Sigmoid colon (tissue), 7 donors: ENCODE measurements at regions of chr19 and their contacts with region 1.

Region 1: DNA sequence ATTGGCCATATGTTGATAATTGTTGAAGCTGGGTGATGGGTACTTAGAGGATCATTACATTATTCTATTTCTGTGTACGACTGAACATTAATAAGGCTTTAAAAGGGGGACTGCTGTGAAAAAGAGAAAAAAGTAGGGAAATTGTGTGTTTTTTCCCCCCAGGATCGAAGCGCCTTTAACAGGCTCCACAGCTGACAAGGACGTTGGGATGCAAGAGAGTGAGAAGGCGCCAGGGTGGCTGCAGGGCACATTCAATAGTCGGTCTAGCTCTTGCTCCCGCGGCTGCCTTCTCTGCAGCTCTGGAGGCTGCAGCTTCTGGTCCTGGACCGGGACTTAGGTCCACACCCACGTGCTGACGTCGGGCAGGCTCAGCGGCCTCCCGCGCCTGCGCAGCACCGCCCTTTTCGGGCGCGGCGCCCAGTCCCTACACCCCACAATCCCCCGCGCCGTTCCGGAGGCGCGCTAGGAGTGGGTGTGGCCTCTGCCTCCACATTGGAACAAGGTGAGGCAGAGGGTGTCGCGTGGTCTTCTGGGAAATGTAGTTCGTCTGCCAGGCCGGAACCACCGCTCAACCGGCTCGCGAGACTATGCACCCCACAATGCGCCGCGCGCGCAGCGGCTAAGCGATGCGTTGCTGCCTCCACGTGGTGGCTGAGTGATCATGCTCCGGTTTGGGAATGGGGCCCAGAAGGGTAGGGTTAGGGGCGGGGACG is 4.9 kb upstream of the LRFN3 start:
- DNase-seq: peak; percentile 100
- H3K4me3 ChIP-seq: peak overlapping the region in 1 of 4 donors; percentile 18
- H3K27ac ChIP-seq: peak overlapping the region; percentile 71 to 79 (median 76)
- H3K4me1 ChIP-seq: peaks cover 0 to 19% (median 13%) of the 10 kb centered on the region in 4 donors
- H3K27me3 ChIP-seq: no peaks in the 10 kb centered on the region
- CTCF ChIP-seq: peak; percentile 81 to 97 (median 92)
- EP300 ChIP-seq: peak in 1 of 4 donors; percentile 80
- POLR2A ChIP-seq: peak; percentile 71 to 84

Region 2: GRCh38 chr19:35693830-35694599 is 237.3 kb before region 1 on chr19:
- intact Hi-C with region 1: loop called (anchors 2 kb)
- DNase-seq: peak; percentile 93
- H3K4me3 ChIP-seq: no peak overlapping the region
- H3K27ac ChIP-seq: no peak overlapping the region
- H3K4me1 ChIP-seq: no peaks in the 10 kb centered on the region
- H3K27me3 ChIP-seq: no peaks in the 10 kb centered on the region
- CTCF ChIP-seq: peak; percentile 96 to 99 (median 97)
- EP300 ChIP-seq: no peak
- POLR2A ChIP-seq: no peak

Region 3: DNA sequence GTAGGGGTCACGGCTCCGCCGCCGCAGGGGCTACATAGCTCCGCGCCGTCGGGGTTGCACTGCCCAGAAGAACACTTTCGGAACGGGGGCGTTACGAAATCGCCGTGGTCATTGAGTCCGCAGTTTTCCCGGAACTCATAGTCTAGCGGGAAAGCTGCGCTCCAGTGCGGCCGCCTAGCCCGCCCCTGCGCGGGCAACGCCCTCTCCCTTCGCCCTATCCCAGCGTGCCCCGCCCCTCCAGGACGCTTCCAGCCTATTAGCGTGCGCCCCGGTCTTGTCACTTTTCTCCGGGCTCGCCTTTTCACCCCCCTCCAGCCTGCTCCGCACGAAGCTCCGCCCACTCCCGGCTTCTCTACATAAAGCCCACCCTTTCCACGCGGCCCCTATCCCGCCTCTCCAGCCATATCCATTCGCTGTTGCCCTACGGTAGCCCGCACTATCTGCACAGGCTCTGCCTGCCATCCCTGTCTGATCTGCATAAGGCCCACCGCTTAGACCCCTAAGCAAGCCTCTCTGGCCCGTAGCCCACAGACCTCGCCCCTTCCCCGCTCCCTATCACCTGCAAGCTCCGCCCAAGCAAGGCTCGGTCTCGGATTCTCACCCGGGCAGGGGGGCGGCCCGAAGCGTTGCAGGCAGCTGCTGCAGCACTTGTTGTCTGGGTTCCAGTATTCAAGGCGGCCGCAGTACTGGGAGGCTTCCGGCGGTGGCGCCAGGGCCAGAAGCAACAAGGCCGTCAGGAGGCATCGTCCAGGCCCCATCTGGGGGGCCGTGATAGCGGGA is 190.7 kb before region 1 on chr19:
- intact Hi-C with region 1: loop called (anchors 1 kb)
- DNase-seq: peak; percentile 99
- H3K4me3 ChIP-seq: peak overlapping the region; percentile 38 to 69 (median 51)
- H3K27ac ChIP-seq: peak overlapping the region; percentile 84 to 91 (median 87)
- H3K4me1 ChIP-seq: peaks cover 0 to 38% (median 30%) of the 10 kb centered on the region in 4 donors
- H3K27me3 ChIP-seq: no peaks in the 10 kb centered on the region
- CTCF ChIP-seq: peak in 2 of 4 experiments; percentile 17 to 26
- EP300 ChIP-seq: peak in 1 of 4 donors; percentile 76
- POLR2A ChIP-seq: no peak

Region 4: GRCh38 chr19:35775298-35776110 is 155.8 kb before region 1 on chr19 and contains the start of gene ARHGAP33:
- intact Hi-C with region 1: loop called (anchors 5 kb)
- DNase-seq: peak; percentile 99
- H3K4me3 ChIP-seq: peak within 1 kb of the TSS; percentile 76 to 97 (median 81)
- H3K27ac ChIP-seq: peak within 1 kb of the TSS in 3 of 4 donors; percentile 63 to 74 (median 69)
- H3K4me1 ChIP-seq: peaks cover 0 to 19% (median 14%) of the 10 kb centered on the region in 4 donors
- H3K27me3 ChIP-seq: no peaks in the 10 kb centered on the region
- CTCF ChIP-seq: no peak
- EP300 ChIP-seq: no peak
- POLR2A ChIP-seq: no peak
- total RNA-seq, gene ARHGAP33: 4.4 to 11.9 (median 8.5) TPM

Region 5: DNA sequence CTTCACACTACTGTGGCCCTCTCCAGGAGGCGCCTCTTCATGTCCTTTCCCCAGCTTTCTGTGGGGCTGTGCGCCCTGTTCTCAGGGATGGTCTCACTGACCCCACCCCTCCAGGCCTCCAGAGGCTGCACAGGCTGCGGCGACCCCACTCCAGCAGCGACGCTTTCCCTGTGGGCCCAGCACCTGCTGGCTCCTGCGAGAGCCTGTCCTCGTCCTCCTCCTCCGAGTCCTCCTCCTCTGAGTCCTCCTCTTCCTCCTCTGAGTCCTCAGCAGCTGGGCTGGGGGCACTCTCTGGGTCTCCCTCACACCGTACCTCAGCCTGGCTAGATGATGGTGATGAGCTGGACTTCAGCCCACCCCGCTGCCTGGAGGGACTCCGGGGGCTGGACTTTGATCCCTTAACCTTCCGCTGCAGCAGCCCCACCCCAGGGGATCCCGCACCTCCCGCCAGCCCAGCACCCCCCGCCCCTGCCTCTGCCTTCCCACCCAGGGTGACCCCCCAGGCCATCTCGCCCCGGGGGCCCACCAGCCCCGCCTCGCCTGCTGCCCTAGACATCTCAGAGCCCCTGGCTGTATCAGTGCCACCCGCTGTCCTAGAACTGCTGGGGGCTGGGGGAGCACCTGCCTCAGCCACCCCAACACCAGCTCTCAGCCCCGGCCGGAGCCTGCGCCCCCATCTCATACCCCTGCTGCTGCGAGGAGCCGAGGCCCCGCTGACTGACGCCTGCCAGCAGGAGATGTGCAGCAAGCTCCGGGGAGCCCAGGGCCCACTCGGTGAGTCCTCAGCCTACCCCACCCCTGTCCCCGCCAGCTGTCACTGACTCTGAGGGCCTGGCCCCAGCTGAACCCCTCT is 144.8 kb before region 1 on chr19:
- intact Hi-C with region 1: no loop called
- DNase-seq: no peak
- H3K4me3 ChIP-seq: no peak overlapping the region
- H3K27ac ChIP-seq: no peak overlapping the region
- H3K4me1 ChIP-seq: no peaks in the 10 kb centered on the region
- H3K27me3 ChIP-seq: no peaks in the 10 kb centered on the region
- CTCF ChIP-seq: no peak
- EP300 ChIP-seq: no peak
- POLR2A ChIP-seq: no peak

Region 6: DNA sequence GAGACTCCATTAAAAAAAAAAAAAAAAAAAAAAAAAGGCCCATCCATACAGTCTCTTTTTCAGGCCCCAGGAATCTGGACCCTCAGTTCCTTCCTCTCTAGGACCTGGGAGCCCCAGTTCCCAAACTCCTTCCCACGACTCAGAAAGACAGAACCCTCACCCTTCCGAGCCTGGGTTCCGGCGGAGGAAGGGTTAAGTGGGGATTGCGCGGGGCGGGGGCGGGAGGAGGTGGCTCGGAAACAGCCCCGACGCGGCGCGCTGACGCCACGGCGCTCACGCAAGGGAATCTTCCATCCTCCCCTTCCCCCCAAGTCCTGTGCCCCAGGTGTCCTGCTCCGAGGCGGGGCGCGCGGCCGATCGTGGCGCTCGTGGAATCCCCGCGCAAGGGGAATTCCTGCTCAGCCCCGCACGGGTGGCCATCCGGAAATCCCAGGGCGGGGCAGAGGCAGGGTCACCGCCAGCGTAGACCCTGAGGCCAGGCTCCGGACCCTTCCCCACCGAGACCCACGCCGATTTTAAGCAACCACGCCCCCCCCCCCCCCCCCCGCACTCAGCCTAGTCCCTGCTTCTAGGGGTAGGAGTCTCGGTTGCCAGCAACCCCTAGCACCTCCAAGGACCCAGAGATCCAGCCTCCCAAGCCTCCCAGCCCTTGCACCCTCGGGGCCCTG is 31.6 kb before region 1 on chr19:
- intact Hi-C with region 1: loop called (anchors 1 kb)
- DNase-seq: peak; percentile 92
- H3K4me3 ChIP-seq: peak overlapping the region; percentile 54 to 74 (median 62)
- H3K27ac ChIP-seq: peak overlapping the region; percentile 82 to 95 (median 90)
- H3K4me1 ChIP-seq: peaks cover 0 to 34% (median 25%) of the 10 kb centered on the region in 4 donors
- H3K27me3 ChIP-seq: no peaks in the 10 kb centered on the region
- CTCF ChIP-seq: no peak
- EP300 ChIP-seq: peak in 2 of 4 donors; percentile 7 to 78
- POLR2A ChIP-seq: peak in 1 of 2 donors; percentile 64